MCF 10A (cell line): ENCODE measurements at regions of chr9 and their contacts with region 1.

Region 1: GRCh38 chr9:82606492-82607382 is 456.2 kb downstream of the RASEF start:
- DNase-seq: peak; percentile 73
- H3K4me3 Mint-ChIP-seq: no peak overlapping the region
- H3K27ac Mint-ChIP-seq: no peak overlapping the region
- H3K4me1 Mint-ChIP-seq: no peaks in the 10 kb centered on the region
- H3K27me3 Mint-ChIP-seq: no peaks in the 10 kb centered on the region
- CTCF ChIP-seq: peak; percentile 57

Region 2: GRCh38 chr9:80605129-80605528 is 2001.6 kb before region 1 on chr9:
- CTCF ChIA-PET with region 1: no interaction called
- POLR2A ChIA-PET with region 1: no interaction called
- intact Hi-C with region 1: loop called (anchors 5 kb)
- DNase-seq: peak; percentile 54
- H3K4me3 Mint-ChIP-seq: no peak overlapping the region
- H3K27ac Mint-ChIP-seq: no peak overlapping the region
- H3K4me1 Mint-ChIP-seq: no peaks in the 10 kb centered on the region
- H3K27me3 Mint-ChIP-seq: no peaks in the 10 kb centered on the region
- CTCF ChIP-seq: peak; percentile 32

Region 3: GRCh38 chr9:81521892-81522291 is 1084.8 kb before region 1 on chr9:
- CTCF ChIA-PET with region 1: interaction called, 13 read pairs
- POLR2A ChIA-PET with region 1: no interaction called
- intact Hi-C with region 1: loop called (anchors 10 kb)
- DNase-seq: peak; percentile 42
- H3K4me3 Mint-ChIP-seq: no peak overlapping the region
- H3K27ac Mint-ChIP-seq: no peak overlapping the region
- H3K4me1 Mint-ChIP-seq: peaks cover 17% of the 10 kb centered on the region
- H3K27me3 Mint-ChIP-seq: no peaks in the 10 kb centered on the region
- CTCF ChIP-seq: no peak

Region 4: DNA sequence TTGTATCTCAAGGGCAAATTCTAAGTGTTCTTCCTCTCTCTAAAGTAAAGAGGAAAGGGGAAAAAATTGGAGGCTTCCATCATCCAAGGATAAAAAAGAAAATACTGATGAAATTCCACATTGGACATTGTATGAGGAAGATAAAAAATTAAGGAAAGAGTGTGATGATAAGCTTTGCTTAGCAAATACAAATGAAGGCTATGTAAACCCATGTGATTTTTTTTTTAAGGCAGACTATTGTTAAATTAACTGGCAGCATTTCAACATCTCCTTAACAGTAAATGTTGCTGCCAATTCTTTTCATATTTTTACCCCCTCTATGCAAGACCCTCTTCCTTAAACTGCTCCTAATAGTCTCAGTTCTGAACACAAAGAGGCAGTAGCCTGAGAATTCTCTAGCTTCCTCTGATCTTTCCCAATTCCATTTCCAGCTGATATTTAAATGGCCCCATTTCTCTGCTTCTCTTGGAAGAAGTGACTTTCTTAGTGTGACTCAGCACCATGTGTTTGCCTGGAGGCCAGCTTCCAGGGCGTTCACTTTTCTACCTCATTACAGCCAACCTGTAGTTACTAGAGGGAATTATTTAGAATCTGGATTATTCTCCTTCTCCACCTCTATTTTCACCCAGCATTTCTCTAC is 1077.1 kb before region 1 on chr9:
- CTCF ChIA-PET with region 1: no interaction called
- POLR2A ChIA-PET with region 1: no interaction called
- intact Hi-C with region 1: loop called (anchors 10 kb)
- DNase-seq: peak; percentile 84
- H3K4me3 Mint-ChIP-seq: no peak overlapping the region
- H3K27ac Mint-ChIP-seq: peak overlapping the region; percentile 53
- H3K4me1 Mint-ChIP-seq: peaks cover 26% of the 10 kb centered on the region
- H3K27me3 Mint-ChIP-seq: no peaks in the 10 kb centered on the region
- CTCF ChIP-seq: no peak

Region 5: DNA sequence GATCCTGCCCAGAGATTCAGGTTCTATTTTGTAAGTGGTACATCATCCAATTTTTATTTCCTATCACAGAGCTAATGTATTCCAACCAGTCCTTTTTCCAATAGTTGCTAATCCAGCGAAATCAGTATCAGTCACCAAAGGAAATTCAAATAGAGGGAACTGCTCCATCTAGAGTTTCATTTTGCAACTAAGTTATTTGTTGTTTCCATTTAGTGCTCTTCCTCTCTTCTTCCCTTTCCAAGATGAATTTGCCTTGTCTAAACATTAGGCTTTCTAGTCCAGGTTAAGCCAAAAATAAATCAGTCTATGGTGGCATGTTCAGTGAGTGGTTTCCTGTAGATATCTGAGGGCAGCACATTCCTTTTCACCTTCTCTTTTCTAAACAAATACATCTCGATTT is 758.3 kb before region 1 on chr9:
- CTCF ChIA-PET with region 1: interaction called, 16 read pairs
- POLR2A ChIA-PET with region 1: no interaction called
- intact Hi-C with region 1: no loop called
- DNase-seq: peak; percentile 35
- H3K4me3 Mint-ChIP-seq: no peak overlapping the region
- H3K27ac Mint-ChIP-seq: no peak overlapping the region
- H3K4me1 Mint-ChIP-seq: no peaks in the 10 kb centered on the region
- H3K27me3 Mint-ChIP-seq: no peaks in the 10 kb centered on the region
- CTCF ChIP-seq: peak; percentile 26

Region 6: GRCh38 chr9:82513242-82513751 is 93.4 kb before region 1 on chr9:
- CTCF ChIA-PET with region 1: no interaction called
- POLR2A ChIA-PET with region 1: no interaction called
- intact Hi-C with region 1: no loop called
- DNase-seq: no peak
- H3K4me3 Mint-ChIP-seq: no peak overlapping the region
- H3K27ac Mint-ChIP-seq: peak overlapping the region; percentile 13
- H3K4me1 Mint-ChIP-seq: peaks cover 7% of the 10 kb centered on the region
- H3K27me3 Mint-ChIP-seq: no peaks in the 10 kb centered on the region
- CTCF ChIP-seq: no peak

Region 7: GRCh38 chr9:82532504-82533180 is 74.1 kb before region 1 on chr9:
- CTCF ChIA-PET with region 1: interaction called, 56 read pairs
- POLR2A ChIA-PET with region 1: interaction called, 3 read pairs
- intact Hi-C with region 1: loop called (anchors 2 kb)
- DNase-seq: peak; percentile 29
- H3K4me3 Mint-ChIP-seq: no peak overlapping the region
- H3K27ac Mint-ChIP-seq: no peak overlapping the region
- H3K4me1 Mint-ChIP-seq: no peaks in the 10 kb centered on the region
- H3K27me3 Mint-ChIP-seq: no peaks in the 10 kb centered on the region
- CTCF ChIP-seq: peak; percentile 37

Region 8: DNA sequence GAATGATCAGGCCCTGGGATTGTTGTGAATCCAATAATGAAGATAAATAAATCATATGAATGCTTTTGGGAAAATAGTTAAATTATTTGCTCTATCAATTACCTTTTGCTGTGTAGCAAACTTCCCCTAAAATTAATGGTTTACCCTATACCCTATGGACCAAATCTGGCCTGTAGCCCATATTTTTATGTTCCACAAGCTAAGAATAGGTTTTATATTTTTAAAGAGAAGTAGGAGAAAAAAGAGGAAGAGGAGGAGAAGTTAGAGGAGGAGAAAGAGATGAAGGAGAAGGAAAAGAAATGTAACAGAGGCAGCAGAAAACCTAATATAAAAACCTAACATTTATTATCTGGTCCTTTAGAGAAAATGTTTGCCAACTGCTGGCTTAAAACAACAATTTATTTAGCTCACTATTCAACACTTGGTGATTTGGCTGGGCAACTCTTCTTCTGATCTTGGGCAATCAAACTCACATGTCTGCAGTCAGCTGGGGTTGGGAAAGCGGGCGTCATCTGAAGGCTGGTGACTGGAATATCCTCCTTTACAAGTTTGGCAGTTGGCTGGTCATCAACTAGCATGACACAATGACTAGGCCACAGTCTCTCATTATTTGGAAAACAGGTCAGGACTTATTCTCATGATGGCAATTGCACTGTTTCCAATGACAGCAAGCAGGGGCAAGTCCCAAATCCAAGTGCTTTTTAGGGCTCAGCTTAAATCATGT is 66.7 kb before region 1 on chr9:
- CTCF ChIA-PET with region 1: interaction called, 56 read pairs
- POLR2A ChIA-PET with region 1: interaction called, 3 read pairs
- intact Hi-C with region 1: no loop called
- DNase-seq: peak; percentile 80
- H3K4me3 Mint-ChIP-seq: no peak overlapping the region
- H3K27ac Mint-ChIP-seq: peak overlapping the region; percentile 65
- H3K4me1 Mint-ChIP-seq: peaks cover 8% of the 10 kb centered on the region
- H3K27me3 Mint-ChIP-seq: no peaks in the 10 kb centered on the region
- CTCF ChIP-seq: no peak

Region 9: GRCh38 chr9:83154087-83154736 is 547.5 kb after region 1 on chr9:
- CTCF ChIA-PET with region 1: no interaction called
- POLR2A ChIA-PET with region 1: no interaction called
- intact Hi-C with region 1: no loop called
- DNase-seq: peak; percentile 79
- H3K4me3 Mint-ChIP-seq: no peak overlapping the region
- H3K27ac Mint-ChIP-seq: peak overlapping the region; percentile 93
- H3K4me1 Mint-ChIP-seq: peaks cover 33% of the 10 kb centered on the region
- H3K27me3 Mint-ChIP-seq: no peaks in the 10 kb centered on the region
- CTCF ChIP-seq: no peak